Calu3 (cell line): ENCODE measurements at regions of chr3 and their contacts with region 1.

Region 1: GRCh38 chr3:88003115-88003755 is 55.6 kb downstream of the CGGBP1 start:
- DNase-seq: peak; percentile 50
- H3K4me3 Mint-ChIP-seq: no peak overlapping the region
- H3K27ac Mint-ChIP-seq: no peak overlapping the region
- H3K4me1 Mint-ChIP-seq: peaks cover 10% of the 10 kb centered on the region
- H3K27me3 Mint-ChIP-seq: no peaks in the 10 kb centered on the region
- CTCF ChIP-seq: peak; percentile 62

Region 2: GRCh38 chr3:87082796-87083440 is 920.3 kb before region 1 on chr3:
- CTCF ChIA-PET with region 1: no interaction called
- intact Hi-C with region 1: loop called (anchors 10 kb)
- DNase-seq: peak; percentile 56
- H3K4me3 Mint-ChIP-seq: no peak overlapping the region
- H3K27ac Mint-ChIP-seq: no peak overlapping the region
- H3K4me1 Mint-ChIP-seq: peaks cover 18% of the 10 kb centered on the region
- H3K27me3 Mint-ChIP-seq: no peaks in the 10 kb centered on the region
- CTCF ChIP-seq: peak; percentile 28

Region 3: GRCh38 chr3:87298111-87298718 is 705.0 kb before region 1 on chr3:
- CTCF ChIA-PET with region 1: interaction called, 3 read pairs
- intact Hi-C with region 1: loop called (anchors 1 kb)
- DNase-seq: peak; percentile 39
- H3K4me3 Mint-ChIP-seq: no peak overlapping the region
- H3K27ac Mint-ChIP-seq: no peak overlapping the region
- H3K4me1 Mint-ChIP-seq: no peaks in the 10 kb centered on the region
- H3K27me3 Mint-ChIP-seq: no peaks in the 10 kb centered on the region
- CTCF ChIP-seq: peak; percentile 27

Region 4: GRCh38 chr3:87503900-87504508 is 499.2 kb before region 1 on chr3:
- CTCF ChIA-PET with region 1: interaction called, 4 read pairs
- intact Hi-C with region 1: loop called (anchors 1 kb)
- DNase-seq: peak; percentile 63
- H3K4me3 Mint-ChIP-seq: no peak overlapping the region
- H3K27ac Mint-ChIP-seq: no peak overlapping the region
- H3K4me1 Mint-ChIP-seq: no peaks in the 10 kb centered on the region
- H3K27me3 Mint-ChIP-seq: no peaks in the 10 kb centered on the region
- CTCF ChIP-seq: peak; percentile 51

Region 5: GRCh38 chr3:87598661-87599318 is 404.4 kb before region 1 on chr3:
- CTCF ChIA-PET with region 1: no interaction called
- intact Hi-C with region 1: no loop called
- DNase-seq: no peak
- H3K4me3 Mint-ChIP-seq: no peak overlapping the region
- H3K27ac Mint-ChIP-seq: no peak overlapping the region
- H3K4me1 Mint-ChIP-seq: no peaks in the 10 kb centered on the region
- H3K27me3 Mint-ChIP-seq: no peaks in the 10 kb centered on the region
- CTCF ChIP-seq: no peak

Region 6: GRCh38 chr3:87792534-87793336 is 210.5 kb before region 1 on chr3:
- CTCF ChIA-PET with region 1: no interaction called
- intact Hi-C with region 1: loop called (anchors 2 kb)
- DNase-seq: peak; percentile 52
- H3K4me3 Mint-ChIP-seq: peak within 1 kb of the TSS; percentile 92
- H3K27ac Mint-ChIP-seq: peak within 1 kb of the TSS; percentile 92
- H3K4me1 Mint-ChIP-seq: peaks cover 21% of the 10 kb centered on the region
- H3K27me3 Mint-ChIP-seq: no peaks in the 10 kb centered on the region
- CTCF ChIP-seq: no peak

Region 7: GRCh38 chr3:88113311-88114162 is 110.3 kb after region 1 on chr3:
- CTCF ChIA-PET with region 1: interaction called, 12 read pairs
- intact Hi-C with region 1: loop called (anchors 2 kb)
- DNase-seq: peak; percentile 69
- H3K4me3 Mint-ChIP-seq: no peak overlapping the region
- H3K27ac Mint-ChIP-seq: no peak overlapping the region
- H3K4me1 Mint-ChIP-seq: no peaks in the 10 kb centered on the region
- H3K27me3 Mint-ChIP-seq: no peaks in the 10 kb centered on the region
- CTCF ChIP-seq: peak; percentile 63